B cell (primary cell): ENCODE measurements at regions of chr19 and their contacts with region 1.

Region 1: DNA sequence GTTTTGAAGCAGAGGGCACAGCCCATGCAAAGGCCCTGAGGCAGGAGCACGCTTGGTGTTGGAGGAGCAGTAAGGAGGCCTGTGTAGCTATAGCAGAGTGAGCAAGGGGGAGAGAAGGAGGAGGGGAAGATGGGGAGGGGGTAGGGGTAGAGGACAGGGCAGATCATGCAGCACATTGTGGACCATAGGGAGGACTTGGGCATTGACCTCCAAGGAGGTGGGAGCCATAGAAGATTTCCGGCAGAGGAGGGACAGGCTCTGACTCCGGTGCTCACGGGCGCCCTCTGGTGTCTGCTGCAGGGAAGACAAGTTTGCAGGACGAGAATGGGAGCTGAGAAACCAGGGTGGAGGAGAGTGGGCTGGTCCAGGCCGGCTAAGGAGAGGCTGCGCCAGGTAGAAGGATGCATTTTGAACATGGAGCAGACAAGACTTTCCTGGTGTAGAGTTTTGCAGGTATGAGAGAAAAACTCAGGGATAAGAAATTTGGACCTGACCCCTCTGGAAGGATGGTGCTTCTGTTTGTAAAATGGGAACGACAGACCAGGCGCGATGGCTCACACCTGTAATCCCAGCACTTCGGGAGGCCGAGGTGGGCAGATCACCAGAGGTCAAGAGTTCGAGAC is 13.7 kb upstream of the CREB3L3 start:
- DNase-seq: peak; percentile 83
- ATAC-seq: peak; percentile 95
- H3K4me3 ChIP-seq: no peak overlapping the region
- H3K4me3 Mint-ChIP-seq: peak overlapping the region; percentile 40
- H3K27ac ChIP-seq: no peak overlapping the region
- H3K27ac Mint-ChIP-seq: no peak overlapping the region
- H3K4me1 ChIP-seq: peaks cover 5 to 9% of the 10 kb centered on the region in 2 donors
- H3K4me1 Mint-ChIP-seq: peaks cover 9% of the 10 kb centered on the region
- H3K27me3 ChIP-seq: peaks cover 0 to 3% (median under 1%) of the 10 kb centered on the region in 4 experiments
- H3K27me3 Mint-ChIP-seq: peaks cover 3% of the 10 kb centered on the region
- CTCF ChIP-seq: peak; percentile 72

Region 2: GRCh38 chr19:3970808-3971598 is 168.7 kb before region 1 on chr19 and contains the start of gene DAPK3:
- CTCF ChIA-PET with region 1: interaction called, 10 read pairs
- POLR2A ChIA-PET with region 1: interaction called, 4 read pairs
- intact Hi-C with region 1: no loop called
- DNase-seq: peak; percentile 93
- ATAC-seq: peak; percentile 97
- H3K4me3 ChIP-seq: peak within 1 kb of the TSS; percentile 41 to 93 (median 80)
- H3K4me3 Mint-ChIP-seq: peak within 1 kb of the TSS; percentile 94
- H3K27ac ChIP-seq: peak within 1 kb of the TSS; percentile 63 to 85
- H3K27ac Mint-ChIP-seq: peak within 1 kb of the TSS; percentile 91
- H3K4me1 ChIP-seq: peaks cover 14 to 18% of the 10 kb centered on the region in 2 donors
- H3K4me1 Mint-ChIP-seq: peaks cover 25% of the 10 kb centered on the region
- H3K27me3 ChIP-seq: no peaks in the 10 kb centered on the region
- H3K27me3 Mint-ChIP-seq: no peaks in the 10 kb centered on the region
- CTCF ChIP-seq: no peak
- total RNA-seq, gene DAPK3: 41.0 and 47.4 TPM in 2 replicates

Region 3: DNA sequence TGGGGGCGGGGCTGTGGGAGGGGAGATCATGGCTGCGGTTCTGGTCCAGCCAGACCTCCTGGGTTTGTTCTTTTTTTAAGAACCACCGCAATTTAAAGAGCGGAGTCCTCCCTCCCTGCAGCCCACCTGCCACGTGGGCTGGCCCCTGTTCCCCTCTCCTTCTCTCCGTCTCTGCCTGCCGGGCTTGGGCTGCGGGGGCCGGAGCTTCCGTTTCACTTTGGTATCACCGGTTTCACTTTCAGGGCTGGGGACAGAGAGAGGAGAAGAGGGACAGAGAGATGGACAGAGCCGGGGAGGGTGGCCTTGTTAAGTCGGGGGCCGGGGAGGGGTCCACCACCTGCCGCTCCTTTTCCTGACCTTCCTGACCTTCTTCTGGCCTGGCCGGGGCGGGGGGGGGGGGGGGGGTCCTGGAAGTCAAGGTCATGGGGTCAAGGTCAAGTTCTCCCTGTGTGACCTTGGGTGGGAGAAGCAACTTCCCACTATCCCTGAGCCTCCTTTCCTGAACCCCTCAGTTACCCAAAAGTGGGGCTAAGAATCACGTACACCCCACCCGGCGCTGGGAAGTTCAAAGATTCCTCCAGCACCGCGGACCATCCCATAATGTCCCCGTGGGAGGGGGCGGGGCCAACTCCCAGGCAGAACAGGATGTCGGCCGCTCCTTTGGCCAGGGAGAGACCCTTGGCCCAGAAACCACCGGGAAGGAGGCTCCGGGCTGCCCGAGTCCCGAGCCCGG is 61.7 kb before region 1 on chr19:
- CTCF ChIA-PET with region 1: interaction called, 13 read pairs
- POLR2A ChIA-PET with region 1: interaction called, 3 read pairs
- intact Hi-C with region 1: no loop called
- DNase-seq: peak; percentile 70
- ATAC-seq: peak; percentile 80
- H3K4me3 ChIP-seq: peak overlapping the region; percentile 44 to 66 (median 63)
- H3K4me3 Mint-ChIP-seq: peak overlapping the region; percentile 93
- H3K27ac ChIP-seq: peak overlapping the region; percentile 35 to 86
- H3K27ac Mint-ChIP-seq: peak overlapping the region; percentile 95
- H3K4me1 ChIP-seq: peaks cover 14 to 21% of the 10 kb centered on the region in 2 donors
- H3K4me1 Mint-ChIP-seq: peaks cover 10% of the 10 kb centered on the region
- H3K27me3 ChIP-seq: no peaks in the 10 kb centered on the region
- H3K27me3 Mint-ChIP-seq: no peaks in the 10 kb centered on the region
- CTCF ChIP-seq: no peak

Region 4: DNA sequence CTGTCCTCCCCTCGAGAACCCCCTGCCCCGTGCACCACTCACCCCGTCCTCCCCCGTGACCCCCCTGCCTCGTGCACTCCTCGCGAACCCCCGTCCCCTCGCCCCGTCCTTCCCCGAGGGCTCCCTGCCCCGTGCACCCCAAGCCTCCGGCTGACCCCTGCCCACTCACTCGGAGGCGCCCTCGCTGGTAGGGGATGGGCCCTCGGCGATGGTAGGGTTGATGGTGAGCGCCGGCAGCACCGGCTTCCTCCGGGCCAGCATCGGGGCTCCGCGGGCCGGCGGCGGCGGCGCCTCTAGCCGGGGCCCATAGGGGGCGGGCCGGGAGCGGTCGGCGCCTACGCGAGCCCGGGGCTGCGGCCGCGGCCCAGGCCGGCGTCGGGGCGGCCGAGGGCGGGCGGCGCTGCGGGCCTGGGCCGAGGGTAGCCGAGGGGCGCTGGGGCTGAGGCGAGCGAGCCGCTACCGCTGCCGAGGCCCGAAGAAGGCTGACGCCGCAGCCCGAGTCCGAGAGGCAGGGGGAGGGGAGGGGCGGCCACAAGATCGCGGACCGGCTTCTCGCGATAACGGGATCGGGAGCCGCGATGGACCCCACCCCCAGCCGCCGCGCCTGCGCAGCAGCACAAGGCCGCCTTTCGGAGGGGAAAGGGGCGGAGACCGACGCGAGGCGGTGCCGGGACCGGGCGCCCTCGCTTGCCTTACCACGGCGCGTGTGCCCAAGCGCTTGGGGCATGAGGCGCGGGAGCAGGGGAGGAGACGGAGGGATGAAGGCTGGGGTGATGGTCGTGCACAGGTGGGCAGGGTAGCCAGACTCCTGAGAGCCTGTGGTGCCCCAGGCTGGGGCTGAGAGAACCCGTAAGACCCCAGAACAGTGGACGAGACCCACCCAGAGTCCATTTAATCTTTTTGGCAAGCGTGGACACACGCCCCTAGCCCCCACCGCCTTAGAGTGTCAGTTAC is 15.8 kb before region 1 on chr19 and contains the start of gene MAP2K2:
- CTCF ChIA-PET with region 1: interaction called, 13 read pairs
- POLR2A ChIA-PET with region 1: interaction called, 9 read pairs
- intact Hi-C with region 1: loop called (anchors 1 kb)
- DNase-seq: peak; percentile 97
- ATAC-seq: peak; percentile 96
- H3K4me3 ChIP-seq: peak within 1 kb of the TSS; percentile 51 to 81 (median 62)
- H3K4me3 Mint-ChIP-seq: peak within 1 kb of the TSS; percentile 87
- H3K27ac ChIP-seq: peak within 1 kb of the TSS; percentile 56 to 85
- H3K27ac Mint-ChIP-seq: peak within 1 kb of the TSS; percentile 90
- H3K4me1 ChIP-seq: peaks cover 16 to 18% of the 10 kb centered on the region in 2 donors
- H3K4me1 Mint-ChIP-seq: peaks cover 20% of the 10 kb centered on the region
- H3K27me3 ChIP-seq: no peaks in the 10 kb centered on the region
- H3K27me3 Mint-ChIP-seq: no peaks in the 10 kb centered on the region
- CTCF ChIP-seq: no peak
- total RNA-seq, gene MAP2K2: 137 and 138 TPM in 2 replicates

Region 5: GRCh38 chr19:4199699-4200293 is 60.1 kb after region 1 on chr19:
- CTCF ChIA-PET with region 1: interaction called, 12 read pairs
- POLR2A ChIA-PET with region 1: no interaction called
- intact Hi-C with region 1: no loop called
- DNase-seq: no peak
- ATAC-seq: no peak
- H3K4me3 ChIP-seq: no peak overlapping the region
- H3K4me3 Mint-ChIP-seq: no peak overlapping the region
- H3K27ac ChIP-seq: no peak overlapping the region
- H3K27ac Mint-ChIP-seq: no peak overlapping the region
- H3K4me1 ChIP-seq: peaks cover 10 to 15% of the 10 kb centered on the region in 2 donors
- H3K4me1 Mint-ChIP-seq: peaks cover 15% of the 10 kb centered on the region
- H3K27me3 ChIP-seq: peaks cover 2 to 42% (median 20%) of the 10 kb centered on the region in 4 experiments
- H3K27me3 Mint-ChIP-seq: peaks cover 30% of the 10 kb centered on the region
- CTCF ChIP-seq: no peak

Region 6: DNA sequence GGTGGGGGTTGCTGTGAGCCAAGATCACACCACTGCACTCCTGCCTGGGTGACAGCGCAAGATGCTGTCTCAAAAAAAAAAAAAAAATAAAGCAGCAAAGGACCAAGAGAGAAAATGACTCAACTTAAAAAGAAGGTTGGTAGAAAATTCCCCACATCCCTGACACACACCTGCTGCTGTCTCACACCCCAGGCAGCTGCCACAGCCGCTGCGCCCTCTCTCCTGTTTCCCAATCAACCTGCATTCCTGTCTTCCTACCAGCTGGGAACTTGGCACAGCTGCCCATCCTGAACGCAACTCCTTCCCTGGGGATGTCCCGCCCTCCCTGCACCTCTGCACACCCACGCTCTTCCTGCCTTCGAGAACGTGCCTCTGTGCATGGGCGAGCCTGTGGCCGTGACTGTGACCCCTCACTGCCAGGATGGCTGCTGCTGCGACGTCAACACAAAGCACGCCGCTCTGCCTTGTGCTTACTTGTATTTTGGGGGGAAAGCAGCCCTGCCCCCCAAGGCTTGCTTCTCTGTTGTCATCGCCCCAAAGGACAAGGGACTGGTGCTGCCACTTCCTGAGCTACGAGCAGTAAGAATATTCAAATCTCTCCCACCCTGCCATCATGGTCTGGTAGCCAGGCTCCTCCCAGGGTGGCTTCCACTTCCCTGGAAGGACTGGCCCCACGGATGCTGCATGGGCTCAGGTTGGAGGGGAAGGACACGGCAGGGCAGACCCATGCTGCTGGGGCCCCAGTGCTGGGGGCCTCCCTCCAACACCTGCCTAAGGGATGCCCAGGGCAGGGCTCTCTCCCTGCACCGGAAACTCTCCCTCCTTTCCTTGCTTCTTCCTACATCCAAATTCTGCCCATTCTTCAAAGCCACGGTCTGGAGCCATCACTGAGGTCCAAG is 239.9 kb after region 1 on chr19:
- CTCF ChIA-PET with region 1: no interaction called
- POLR2A ChIA-PET with region 1: no interaction called
- intact Hi-C with region 1: no loop called
- DNase-seq: peak; percentile 84
- ATAC-seq: peak; percentile 44
- H3K4me3 ChIP-seq: peak overlapping the region in 4 of 5 experiments; percentile 28 to 54 (median 48)
- H3K4me3 Mint-ChIP-seq: peak overlapping the region; percentile 92
- H3K27ac ChIP-seq: peak overlapping the region; percentile 75 to 81
- H3K27ac Mint-ChIP-seq: peak overlapping the region; percentile 97
- H3K4me1 ChIP-seq: peaks cover 70 to 75% of the 10 kb centered on the region in 2 donors
- H3K4me1 Mint-ChIP-seq: peaks cover 79% of the 10 kb centered on the region
- H3K27me3 ChIP-seq: no peaks in the 10 kb centered on the region
- H3K27me3 Mint-ChIP-seq: no peaks in the 10 kb centered on the region
- CTCF ChIP-seq: no peak